WTC11 (cell line): ENCODE measurements at regions of chr15 and their contacts with region 1.

Region 1: GRCh38 chr15:33309602-33310276 is 1.0 kb upstream of the RYR3 start:
- DNase-seq: peak; percentile 51
- ATAC-seq: peak; percentile 53
- H3K4me3 Mint-ChIP-seq: peak overlapping the region; percentile 82
- H3K27ac Mint-ChIP-seq: no peak overlapping the region
- H3K4me1 Mint-ChIP-seq: peaks cover 27% of the 10 kb centered on the region
- H3K27me3 Mint-ChIP-seq: peaks cover 54% of the 10 kb centered on the region
- CTCF ChIP-seq: no peak; the same call in 1 of the 2 replicates

Region 2: DNA sequence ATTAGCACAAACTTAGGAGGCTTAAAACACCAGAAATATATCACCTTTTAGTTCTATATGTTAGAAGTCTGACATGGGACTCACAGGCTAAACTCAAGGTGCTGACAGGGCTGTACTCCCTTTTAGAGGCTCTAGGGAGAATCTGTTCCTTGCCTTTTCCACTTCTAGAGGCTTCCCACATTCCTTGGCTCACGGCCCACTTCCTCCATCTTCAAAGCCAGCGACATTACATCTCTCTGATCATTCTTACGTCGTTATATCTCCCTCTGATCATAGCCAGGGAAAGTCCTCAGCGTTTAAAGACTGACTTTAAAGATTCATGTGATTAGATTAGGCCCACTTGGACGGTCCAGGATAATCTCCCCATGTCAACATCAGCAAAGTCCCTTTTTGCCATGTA is 425.6 kb before region 1 on chr15:
- CTCF ChIA-PET with region 1: no interaction called
- POLR2A ChIA-PET with region 1: no interaction called
- DNase-seq: no peak
- ATAC-seq: no peak
- H3K4me3 Mint-ChIP-seq: no peak overlapping the region
- H3K27ac Mint-ChIP-seq: no peak overlapping the region
- H3K4me1 Mint-ChIP-seq: peaks cover 22% of the 10 kb centered on the region
- H3K27me3 Mint-ChIP-seq: no peaks in the 10 kb centered on the region
- CTCF ChIP-seq: no peak

Region 3: GRCh38 chr15:33298631-33299030 is 11.1 kb before region 1 on chr15:
- CTCF ChIA-PET with region 1: interaction called, 19 read pairs
- POLR2A ChIA-PET with region 1: no interaction called
- DNase-seq: no peak
- ATAC-seq: no peak
- H3K4me3 Mint-ChIP-seq: no peak overlapping the region
- H3K27ac Mint-ChIP-seq: no peak overlapping the region
- H3K4me1 Mint-ChIP-seq: peaks cover under 1% of the 10 kb centered on the region; the same call in 1 of the 2 replicates
- H3K27me3 Mint-ChIP-seq: no peaks in the 10 kb centered on the region; the same call in 1 of the 2 replicates
- CTCF ChIP-seq: no peak